ENCODE measurements at regions of chr17 and their contacts with region 1.

Region 1: DNA sequence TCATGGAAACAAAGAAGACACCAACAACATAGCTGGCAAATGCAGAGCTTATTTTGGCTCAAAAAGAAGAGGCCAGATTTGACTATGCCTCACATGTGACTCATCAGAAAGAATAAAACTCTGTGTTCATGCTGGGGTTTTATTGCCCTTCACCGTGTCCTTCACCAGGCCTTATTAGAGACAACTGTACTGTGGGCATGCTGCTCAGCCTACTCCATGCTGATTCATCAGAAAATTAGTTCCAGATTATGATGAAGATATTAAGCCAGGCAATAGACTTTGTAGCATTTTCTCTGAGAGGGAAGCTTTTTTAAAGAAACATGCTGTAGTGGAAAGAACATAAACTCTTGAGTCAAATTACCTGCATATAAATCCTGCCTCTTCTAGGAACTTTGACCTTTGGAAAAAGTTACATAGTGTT is 89.8 kb downstream of the CYB561 start:
- DNase-seq: peak in 1 of 2 donors; percentile 65
- H3K4me3 ChIP-seq: no peak overlapping the region
- H3K27ac ChIP-seq: peak overlapping the region; percentile 45 to 62
- H3K4me1 ChIP-seq: peaks cover 3 to 18% of the 10 kb centered on the region in 2 donors
- H3K27me3 ChIP-seq: no peaks in the 10 kb centered on the region
- CTCF ChIP-seq: no peak

Region 2: GRCh38 chr17:63275318-63275970 is 80.9 kb before region 1 on chr17:
- intact Hi-C with region 1: loop called (anchors 5 kb)
- DNase-seq: no peak
- H3K4me3 ChIP-seq: no peak overlapping the region
- H3K27ac ChIP-seq: no peak overlapping the region
- H3K4me1 ChIP-seq: peaks cover 0 to 17% of the 10 kb centered on the region in 2 donors
- H3K27me3 ChIP-seq: no peaks in the 10 kb centered on the region
- CTCF ChIP-seq: no peak